HCT116 (cell line): ENCODE measurements at regions of chr7 and their contacts with region 1.

Region 1: GRCh38 chr7:128347647-128348097 is 4.0 kb upstream of the RBM28 start:
- DNase-seq: peak; percentile 18
- ATAC-seq: peak; percentile 60
- H3K4me3 ChIP-seq: no peak overlapping the region
- H3K27ac ChIP-seq: no peak overlapping the region
- H3K4me1 ChIP-seq: peaks cover 3 to 4% of the 10 kb centered on the region in 2 experiments; a peak in 3 of 4 replicates
- H3K27me3 ChIP-seq: no peaks in the 10 kb centered on the region
- CTCF ChIP-seq: peak; percentile 76 to 83 (median 78)
- POLR2A ChIP-seq: no peak
- RAD21 ChIP-seq: peak; percentile 91

Region 2: DNA sequence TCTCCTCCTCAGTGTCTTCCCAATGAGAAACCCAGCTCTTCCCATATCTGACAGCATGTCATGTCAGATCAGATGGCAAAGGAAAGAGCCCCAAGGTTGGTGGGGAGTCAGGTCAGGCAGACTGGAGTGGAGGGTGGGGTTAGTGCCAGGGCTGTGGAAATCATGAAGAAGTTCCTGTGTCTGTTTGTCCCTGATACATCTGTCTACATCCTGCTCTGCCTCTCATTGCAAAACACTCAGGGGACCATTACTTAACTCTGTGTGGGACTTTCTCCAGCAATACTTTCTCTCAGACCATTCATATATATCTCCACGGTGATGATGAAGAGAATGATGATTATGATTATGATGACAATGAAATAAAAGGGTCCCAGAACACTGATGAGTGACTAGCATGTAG is 10.6 kb after region 1 on chr7:
- CTCF ChIA-PET with region 1: interaction called, 14 read pairs
- POLR2A ChIA-PET with region 1: no interaction called
- RAD21 ChIA-PET with region 1: no interaction called
- intact Hi-C with region 1: no loop called
- DNase-seq: no peak
- ATAC-seq: no peak
- H3K4me3 ChIP-seq: no peak overlapping the region
- H3K27ac ChIP-seq: no peak overlapping the region
- H3K4me1 ChIP-seq: peaks cover 6 to 18% of the 10 kb centered on the region in 2 experiments
- H3K27me3 ChIP-seq: no peaks in the 10 kb centered on the region
- CTCF ChIP-seq: no peak
- POLR2A ChIP-seq: no peak
- RAD21 ChIP-seq: no peak

Region 3: GRCh38 chr7:128381161-128381821 is 33.6 kb after region 1 on chr7:
- CTCF ChIA-PET with region 1: interaction called, 134 read pairs
- POLR2A ChIA-PET with region 1: no interaction called
- RAD21 ChIA-PET with region 1: interaction called in 1 of 2 experiments, 4 read pairs
- intact Hi-C with region 1: no loop called
- DNase-seq: peak; percentile 33
- ATAC-seq: peak; percentile 89
- H3K4me3 ChIP-seq: no peak overlapping the region
- H3K27ac ChIP-seq: no peak overlapping the region
- H3K4me1 ChIP-seq: peaks cover 0 to 7% of the 10 kb centered on the region in 2 experiments; a peak in 1 of 4 replicates
- H3K27me3 ChIP-seq: no peaks in the 10 kb centered on the region
- CTCF ChIP-seq: peak; percentile 53 to 94 (median 94); a peak in 5 of 6 replicates
- POLR2A ChIP-seq: no peak
- RAD21 ChIP-seq: peak; percentile 24; the same call in 1 of the 2 replicates

Region 4: GRCh38 chr7:128387216-128388144 is 39.8 kb after region 1 on chr7:
- CTCF ChIA-PET with region 1: interaction called, 134 read pairs
- POLR2A ChIA-PET with region 1: interaction called, 4 read pairs
- RAD21 ChIA-PET with region 1: interaction called, 8 to 14 read pairs
- intact Hi-C with region 1: loop called (anchors 1 kb)
- DNase-seq: peak; percentile 54
- ATAC-seq: peak; percentile 93
- H3K4me3 ChIP-seq: no peak overlapping the region
- H3K27ac ChIP-seq: no peak overlapping the region
- H3K4me1 ChIP-seq: no peaks in the 10 kb centered on the region
- H3K27me3 ChIP-seq: no peaks in the 10 kb centered on the region
- CTCF ChIP-seq: peak; percentile 78 to 93 (median 90)
- POLR2A ChIP-seq: no peak
- RAD21 ChIP-seq: peak; percentile 82

Region 5: GRCh38 chr7:128459394-128459878 is 111.8 kb after region 1 on chr7:
- CTCF ChIA-PET with region 1: interaction called, 14 read pairs
- POLR2A ChIA-PET with region 1: no interaction called
- RAD21 ChIA-PET with region 1: interaction called in 1 of 2 experiments, 3 read pairs
- intact Hi-C with region 1: loop called (anchors 2 kb)
- DNase-seq: peak; percentile 59
- ATAC-seq: peak; percentile 58
- H3K4me3 ChIP-seq: no peak overlapping the region
- H3K27ac ChIP-seq: no peak overlapping the region
- H3K4me1 ChIP-seq: peaks cover 10 to 35% of the 10 kb centered on the region in 2 experiments
- H3K27me3 ChIP-seq: no peaks in the 10 kb centered on the region
- CTCF ChIP-seq: peak; percentile 59 to 81 (median 76); a peak in 5 of 6 replicates
- POLR2A ChIP-seq: no peak
- RAD21 ChIP-seq: peak; percentile 56